ENCODE measurements at regions of chr7 and their contacts with region 1.

Region 1: DNA sequence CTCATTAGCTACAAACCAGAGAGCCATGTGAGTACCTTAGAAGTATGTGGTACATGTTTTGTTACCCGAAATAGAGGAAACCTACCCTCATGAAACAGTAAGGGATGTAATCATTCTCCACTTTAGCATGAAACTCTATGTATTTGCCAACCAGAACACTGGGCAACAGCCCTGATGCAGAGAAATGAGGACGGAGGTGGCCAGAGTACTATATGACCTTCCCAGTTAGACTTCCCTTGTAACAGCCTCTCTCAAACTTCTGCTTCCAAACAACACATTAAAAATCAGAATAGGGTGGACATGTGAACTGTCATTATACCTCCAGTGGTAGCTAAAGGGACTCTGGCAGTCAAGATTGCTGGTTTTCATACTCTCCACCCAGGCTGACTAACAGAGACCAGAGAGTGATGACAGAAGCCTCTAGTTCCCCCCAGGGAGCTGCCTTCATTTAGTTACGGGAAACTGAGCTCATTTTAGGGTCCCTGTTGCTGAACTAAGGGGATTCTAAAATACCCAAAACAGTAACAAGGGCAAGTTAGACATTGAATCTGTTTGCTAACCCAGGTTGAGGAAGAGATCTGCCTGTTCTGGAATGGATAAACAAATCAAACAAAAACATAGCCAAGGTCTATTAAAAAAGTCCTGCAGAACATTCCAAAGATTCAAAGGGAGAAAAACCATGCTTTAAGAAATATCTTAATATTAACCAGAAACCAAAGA is 83.1 kb downstream of the VPS41 start:
- DNase-seq: no peak
- H3K4me3 ChIP-seq: no peak overlapping the region
- H3K27ac ChIP-seq: no peak overlapping the region
- H3K4me1 ChIP-seq: no peaks in the 10 kb centered on the region
- H3K27me3 ChIP-seq: no peaks in the 10 kb centered on the region
- CTCF ChIP-seq: no peak

Region 2: GRCh38 chr7:38881015-38881414 is 55.1 kb after region 1 on chr7:
- CTCF ChIA-PET with region 1: no interaction called
- POLR2A ChIA-PET with region 1: interaction called, 16 read pairs
- intact Hi-C with region 1: loop called (anchors 10 kb)
- DNase-seq: no peak
- H3K4me3 ChIP-seq: no peak overlapping the region
- H3K27ac ChIP-seq: no peak overlapping the region
- H3K4me1 ChIP-seq: no peaks in the 10 kb centered on the region
- H3K27me3 ChIP-seq: no peaks in the 10 kb centered on the region
- CTCF ChIP-seq: 0 out of 2 replicates have a peak, but pooled peaks have one; percentile 9

Region 3: GRCh38 chr7:38889861-38890432 is 64.1 kb after region 1 on chr7:
- CTCF ChIA-PET with region 1: no interaction called
- POLR2A ChIA-PET with region 1: no interaction called
- intact Hi-C with region 1: loop called (anchors 10 kb)
- DNase-seq: no peak
- H3K4me3 ChIP-seq: no peak overlapping the region
- H3K27ac ChIP-seq: no peak overlapping the region
- H3K4me1 ChIP-seq: no peaks in the 10 kb centered on the region
- H3K27me3 ChIP-seq: no peaks in the 10 kb centered on the region
- CTCF ChIP-seq: no peak; the same call in 1 of the 2 replicates

Region 4: DNA sequence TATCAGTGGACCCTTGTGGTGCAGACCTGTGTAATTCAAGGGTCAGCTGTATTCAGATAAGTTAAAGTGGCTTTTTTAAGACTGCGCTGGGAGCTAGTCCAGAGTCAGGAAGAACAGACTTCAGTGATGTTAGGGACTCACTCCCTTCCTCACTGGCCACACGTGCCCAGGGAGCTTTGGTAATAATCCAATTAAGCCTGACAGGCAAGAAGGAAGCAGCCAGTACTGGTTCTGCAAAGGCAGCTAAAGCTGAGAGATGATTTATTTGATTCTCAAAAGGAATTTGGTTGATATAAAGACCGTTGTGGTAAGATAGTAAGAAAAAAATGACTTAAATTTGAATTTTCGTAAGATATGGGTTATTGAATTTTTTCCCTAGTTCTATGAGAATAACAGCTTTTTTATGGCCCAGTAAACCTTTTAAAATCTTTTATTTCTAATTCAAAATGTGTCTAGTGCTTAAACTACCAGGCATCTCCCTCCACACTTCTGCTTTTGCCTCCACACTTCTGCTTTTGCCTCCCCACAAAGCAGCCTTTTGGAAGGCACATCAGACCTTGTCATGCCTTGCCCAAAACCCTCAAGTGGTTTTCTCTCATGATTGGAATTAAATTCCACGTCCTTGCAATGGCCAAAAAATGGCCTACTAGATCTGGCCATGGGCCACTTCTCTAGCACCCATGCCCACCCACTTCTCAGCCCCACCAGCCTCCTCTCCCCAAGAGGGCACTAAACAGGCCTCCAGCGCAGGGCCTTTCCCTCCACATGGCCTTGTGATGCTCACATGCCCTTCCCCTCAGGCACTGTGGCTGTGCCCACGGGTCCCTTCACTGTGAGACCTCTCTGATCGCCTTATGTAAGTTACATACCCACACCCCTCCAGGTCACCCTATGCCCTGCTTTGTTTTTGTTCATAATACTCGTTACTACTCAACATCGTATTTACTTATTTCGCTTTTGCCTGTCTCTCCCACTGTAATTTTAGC is 244.3 kb after region 1 on chr7:
- CTCF ChIA-PET with region 1: no interaction called
- POLR2A ChIA-PET with region 1: no interaction called
- intact Hi-C with region 1: no loop called
- DNase-seq: peak; percentile 13
- H3K4me3 ChIP-seq: no peak overlapping the region
- H3K27ac ChIP-seq: no peak overlapping the region
- H3K4me1 ChIP-seq: no peaks in the 10 kb centered on the region
- H3K27me3 ChIP-seq: peaks cover 10% of the 10 kb centered on the region
- CTCF ChIP-seq: no peak

Region 5: GRCh38 chr7:39417642-39418041 is 591.8 kb after region 1 on chr7:
- CTCF ChIA-PET with region 1: no interaction called
- POLR2A ChIA-PET with region 1: no interaction called
- intact Hi-C with region 1: no loop called
- DNase-seq: no peak
- H3K4me3 ChIP-seq: no peak overlapping the region
- H3K27ac ChIP-seq: no peak overlapping the region
- H3K4me1 ChIP-seq: no peaks in the 10 kb centered on the region
- H3K27me3 ChIP-seq: peaks cover 64% of the 10 kb centered on the region
- CTCF ChIP-seq: no peak